ENCODE measurements at regions of chr12 and their contacts with region 1.

Region 1: GRCh38 chr12:75553398-75553797 is 42.0 kb upstream of the KRR1 start:
- DNase-seq: no peak
- ATAC-seq: peak; percentile 44
- H3K4me3 ChIP-seq: no peak overlapping the region
- H3K27ac ChIP-seq: no peak overlapping the region
- H3K4me1 ChIP-seq: no peaks in the 10 kb centered on the region
- H3K27me3 ChIP-seq: no peaks in the 10 kb centered on the region
- CTCF ChIP-seq: no peak
- EP300 ChIP-seq: no peak
- POLR2A ChIP-seq: no peak
- RAD21 ChIP-seq: no peak

Region 2: GRCh38 chr12:75542942-75543341 is 10.5 kb before region 1 on chr12:
- CTCF ChIA-PET with region 1: interaction called, 5 read pairs
- POLR2A ChIA-PET with region 1: interaction called, 3 read pairs
- RAD21 ChIA-PET with region 1: interaction called, 3 read pairs
- SMC1A ChIA-PET with region 1: interaction called, 26 read pairs
- in situ Hi-C with region 1: no loop called
- intact Hi-C with region 1: no loop called
- DNase-seq: no peak
- ATAC-seq: no peak
- H3K4me3 ChIP-seq: no peak overlapping the region
- H3K27ac ChIP-seq: no peak overlapping the region
- H3K4me1 ChIP-seq: no peaks in the 10 kb centered on the region
- H3K27me3 ChIP-seq: no peaks in the 10 kb centered on the region
- CTCF ChIP-seq: no peak
- EP300 ChIP-seq: no peak
- POLR2A ChIP-seq: no peak
- RAD21 ChIP-seq: no peak

Measured in GM12878 (cell line).